ENCODE measurements at regions of chr18 and their contacts with region 1.

Region 1: GRCh38 chr18:59387687-59388565 is 28.9 kb upstream of the LMAN1 start:
- DNase-seq: no peak
- H3K4me3 ChIP-seq: no peak overlapping the region
- H3K27ac ChIP-seq: no peak overlapping the region
- H3K4me1 ChIP-seq: no peaks in the 10 kb centered on the region
- H3K27me3 ChIP-seq: no peaks in the 10 kb centered on the region
- CTCF ChIP-seq: no peak
- EP300 ChIP-seq: no peak
- POLR2A ChIP-seq: no peak

Region 2: DNA sequence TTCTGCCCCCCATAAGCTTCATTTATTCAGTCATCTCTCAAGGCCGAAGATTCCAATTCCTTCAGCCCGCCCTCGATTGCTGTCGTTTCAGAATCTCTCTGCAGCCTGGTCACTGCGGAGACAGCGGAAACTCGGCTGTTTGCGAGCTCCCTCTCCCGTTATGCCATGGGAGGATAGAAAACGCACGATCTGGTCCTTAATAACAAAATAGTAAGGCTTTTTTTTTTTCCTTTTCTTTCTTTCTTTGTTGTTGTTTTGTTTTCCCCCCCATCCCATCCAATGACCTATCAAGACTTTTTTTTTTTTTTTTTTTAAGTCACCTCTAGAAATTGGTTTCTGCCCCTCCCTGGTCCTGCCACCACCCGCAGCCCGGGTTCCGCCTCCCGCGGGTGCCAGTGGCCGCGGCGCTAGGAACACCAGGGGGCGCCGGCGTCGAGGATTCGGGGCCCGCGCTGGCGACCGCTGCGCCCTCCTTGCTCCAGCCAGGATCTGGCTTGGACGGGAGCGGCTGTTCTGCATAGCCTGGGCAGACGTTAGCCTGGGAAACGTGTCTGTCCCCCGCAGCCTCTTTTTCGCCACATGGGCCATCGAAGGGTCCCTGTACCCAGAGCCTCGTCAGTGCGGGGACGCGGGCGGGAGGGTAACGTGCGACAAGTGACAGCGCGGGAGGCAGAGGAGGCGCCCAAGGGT is 79.5 kb before region 1 on chr18:
- intact Hi-C with region 1: loop called (anchors 10 kb)
- DNase-seq: peak; percentile 81 to 91
- H3K4me3 ChIP-seq: peak overlapping the region; percentile 13 to 46 (median 26)
- H3K27ac ChIP-seq: no peak overlapping the region
- H3K4me1 ChIP-seq: peaks cover 0 to 12% (median 10%) of the 10 kb centered on the region in 4 donors
- H3K27me3 ChIP-seq: peaks cover 0 to 74% (median 22%) of the 10 kb centered on the region in 3 donors
- CTCF ChIP-seq: peak in 5 of 7 experiments; percentile 66 to 90 (median 82)
- EP300 ChIP-seq: no peak
- POLR2A ChIP-seq: no peak

Measured in stomach (tissue), 19 donors.